Activated naive CD4-positive, alpha-beta T cell treated with anti-CD3 and anti-CD28 coated beads, Interleukin-2, amount 10 ng/mL, durations not matched to agents 7 days and 5 days (primary cell): ENCODE measurements at regions of chr11 and their contacts with region 1.

Region 1: DNA sequence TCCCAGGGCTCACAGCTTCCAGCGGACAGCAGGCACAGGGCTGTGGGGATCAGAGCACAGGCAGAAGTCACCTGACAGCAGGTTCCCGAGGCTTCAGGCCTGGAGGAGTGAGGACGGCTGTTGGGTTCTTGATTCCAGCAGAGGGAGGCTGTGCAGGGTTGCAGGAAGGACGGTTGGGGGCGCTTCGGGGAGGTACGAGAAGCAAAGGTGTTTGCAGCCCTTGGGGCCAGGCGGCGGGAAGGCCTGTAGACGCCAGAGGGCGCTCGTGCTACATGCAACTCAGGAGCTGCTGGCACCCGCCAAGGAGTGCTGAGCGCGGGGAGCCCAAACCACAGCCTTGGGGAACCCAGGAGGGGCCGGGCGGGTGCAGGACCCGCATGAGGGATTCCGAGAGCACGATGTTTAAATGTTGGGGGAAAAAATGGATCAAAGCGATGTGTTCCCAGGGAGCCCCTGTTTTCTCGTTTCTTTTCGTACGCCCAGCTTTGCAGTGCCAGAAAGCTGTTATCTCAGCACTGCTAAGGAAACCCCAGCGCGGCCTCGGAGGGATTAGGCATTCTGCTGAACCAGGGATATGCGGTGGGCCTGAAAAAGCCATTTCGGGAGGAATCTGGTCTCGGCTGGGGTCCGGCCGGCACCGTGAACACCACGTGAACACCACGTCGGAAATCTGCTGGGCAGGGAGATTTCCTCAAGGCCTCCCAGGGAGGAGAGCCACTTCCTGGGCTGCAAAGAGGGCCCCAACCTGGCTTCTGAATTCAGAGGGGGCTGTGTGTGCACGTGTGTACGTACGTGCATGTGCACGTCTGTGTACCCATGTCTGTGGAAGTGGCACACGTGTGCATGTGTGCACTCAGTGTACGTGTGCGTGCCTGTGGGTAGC is 88.1 kb downstream of the KCNQ1 start:
- DNase-seq: peak; percentile 95
- H3K4me3 Mint-ChIP-seq: peak overlapping the region; percentile 40
- H3K27ac Mint-ChIP-seq: peak overlapping the region; percentile 76
- H3K4me1 Mint-ChIP-seq: peaks cover 19% of the 10 kb centered on the region
- H3K27me3 Mint-ChIP-seq: peaks cover 5% of the 10 kb centered on the region

Region 2: GRCh38 chr11:2444821-2445745 is 87.9 kb before region 1 on chr11 and contains the start of gene KCNQ1:
- CTCF ChIA-PET with region 1: interaction called, 15 read pairs
- DNase-seq: peak; percentile 55
- H3K4me3 Mint-ChIP-seq: peak within 1 kb of the TSS; percentile 97
- H3K27ac Mint-ChIP-seq: peak within 1 kb of the TSS; percentile 73
- H3K4me1 Mint-ChIP-seq: peaks cover 38% of the 10 kb centered on the region
- H3K27me3 Mint-ChIP-seq: peaks cover 41% of the 10 kb centered on the region

Region 3: DNA sequence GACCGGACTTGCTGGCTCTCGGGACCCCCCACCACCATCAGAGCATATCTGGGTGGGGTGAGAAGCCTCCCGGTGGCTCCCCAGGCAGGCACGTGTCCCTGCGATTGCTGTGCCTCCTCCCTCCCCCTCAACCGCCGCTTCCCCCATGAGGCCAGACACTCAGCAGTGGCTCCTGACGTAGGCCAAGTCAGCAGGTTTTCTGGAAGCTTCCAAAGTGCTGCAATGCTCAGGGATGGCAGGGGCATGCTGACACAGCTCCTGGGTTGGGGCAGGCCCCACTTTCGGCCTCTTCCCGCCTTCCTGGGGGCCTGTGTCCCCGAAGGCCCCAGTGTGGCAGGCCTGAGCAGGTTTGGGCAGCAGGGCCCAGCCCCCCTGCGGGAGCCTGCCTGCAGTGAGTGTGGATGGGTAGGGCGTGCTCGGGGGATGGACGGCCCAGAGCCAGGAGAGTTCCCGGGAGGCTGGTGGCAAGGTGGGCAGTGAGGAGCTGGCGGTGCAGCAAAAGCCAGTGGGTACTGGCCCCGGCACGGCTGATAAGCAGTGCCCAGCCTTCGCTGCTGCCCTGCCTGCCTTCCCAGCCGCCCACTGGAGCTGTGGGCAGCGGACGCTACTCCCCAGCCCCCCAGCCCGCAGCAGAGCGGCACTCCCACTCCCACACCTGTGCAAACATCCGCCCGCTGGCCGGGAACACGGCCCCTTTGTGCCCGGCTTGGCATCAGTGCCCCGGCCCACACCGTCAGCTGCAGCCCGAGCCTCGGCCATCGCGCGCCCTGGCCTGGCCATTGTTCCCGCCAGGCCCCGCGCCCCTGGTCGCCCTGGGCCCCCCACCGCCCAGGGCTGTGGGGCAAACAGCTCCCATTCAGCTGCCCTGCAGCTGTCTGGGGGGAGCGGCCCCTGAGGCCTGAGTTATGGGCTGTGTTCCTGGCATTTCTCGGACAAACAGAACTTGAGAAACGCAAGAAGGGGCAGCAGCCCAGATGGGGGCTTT is 41.9 kb after region 1 on chr11:
- CTCF ChIA-PET with region 1: no interaction called
- DNase-seq: peak; percentile 5
- H3K4me3 Mint-ChIP-seq: no peak overlapping the region
- H3K27ac Mint-ChIP-seq: no peak overlapping the region
- H3K4me1 Mint-ChIP-seq: no peaks in the 10 kb centered on the region
- H3K27me3 Mint-ChIP-seq: no peaks in the 10 kb centered on the region

Region 4: DNA sequence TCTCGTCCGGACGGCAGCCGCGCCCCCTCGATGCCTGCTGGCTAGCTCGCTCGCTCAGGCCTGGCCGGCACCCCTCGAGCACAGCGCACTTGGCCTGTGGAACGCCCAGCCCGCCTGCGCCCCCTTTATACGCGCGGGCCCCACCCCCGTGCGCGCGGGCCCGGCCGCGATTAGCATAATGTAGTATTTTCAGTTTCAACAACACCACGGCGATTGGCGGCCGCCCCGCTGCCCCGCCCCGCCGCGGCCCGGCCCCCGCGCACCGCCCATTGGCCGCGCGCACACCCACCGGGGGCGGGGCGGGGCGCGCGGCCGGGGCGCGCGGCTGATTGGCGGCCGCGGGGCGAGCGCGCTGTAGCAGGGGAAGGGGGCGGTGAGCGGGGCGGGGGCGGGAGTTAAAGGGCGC is 352.7 kb after region 1 on chr11 and contains the start of gene CDKN1C:
- CTCF ChIA-PET with region 1: interaction called, 344 read pairs
- DNase-seq: peak; percentile 87
- H3K4me3 Mint-ChIP-seq: peak within 1 kb of the TSS; percentile 75
- H3K27ac Mint-ChIP-seq: no peak within 1 kb of the TSS
- H3K4me1 Mint-ChIP-seq: peaks cover 11% of the 10 kb centered on the region
- H3K27me3 Mint-ChIP-seq: peaks cover 65% of the 10 kb centered on the region